H1 (cell line): ENCODE measurements at regions of chr1 and their contacts with region 1.

Region 1: DNA sequence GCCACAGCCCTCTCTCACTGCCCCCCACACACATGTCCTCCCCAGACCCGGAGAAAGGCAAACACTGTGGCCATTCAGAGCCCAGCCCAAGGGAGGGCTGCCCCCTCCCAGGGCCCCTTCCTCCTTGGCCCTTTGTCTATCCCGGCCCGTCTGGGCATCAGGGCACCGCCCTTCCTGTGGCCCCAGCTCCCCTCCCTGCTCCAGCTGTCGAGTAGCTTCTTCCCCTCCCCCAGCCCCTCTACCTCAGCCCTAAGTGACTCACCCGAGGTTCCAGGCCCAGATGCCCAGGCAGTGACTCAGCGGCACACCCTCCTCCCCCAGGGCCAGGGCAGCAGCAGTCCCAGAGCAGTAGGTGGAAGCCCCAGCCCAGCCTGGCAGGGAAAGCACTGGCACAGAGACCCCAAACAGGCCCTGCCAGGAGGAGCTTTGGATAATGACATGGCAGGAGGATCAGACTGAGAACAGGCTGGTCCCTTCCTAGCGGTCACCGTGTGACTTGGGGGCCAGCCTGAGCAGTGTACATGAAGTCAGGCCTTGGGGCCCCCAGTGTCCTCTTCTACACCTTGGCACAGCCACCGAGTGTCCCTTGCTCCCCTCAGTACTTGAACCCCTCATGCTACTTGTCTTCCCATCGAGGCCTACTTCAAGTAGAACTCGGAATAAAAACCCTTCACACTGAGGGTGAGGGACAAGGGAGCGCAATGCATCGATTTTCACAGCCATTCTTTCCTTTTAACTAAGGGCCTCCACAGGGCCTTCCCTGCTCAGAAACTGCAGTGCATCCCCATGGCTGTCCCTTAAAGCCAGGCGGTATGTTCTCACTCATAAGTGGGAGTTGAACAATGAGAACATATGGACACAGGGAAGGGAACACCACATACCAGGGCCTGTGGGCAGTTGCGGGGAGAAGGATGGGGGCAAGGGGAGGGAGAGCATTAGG is 1.1 kb upstream of the S100A2 start:
- DNase-seq: peak; percentile 76 to 90
- H3K4me3 ChIP-seq: no peak overlapping the region
- H3K27ac ChIP-seq: no peak overlapping the region
- H3K4me1 ChIP-seq: peaks cover 11 to 26% (median 20%) of the 10 kb centered on the region in 4 experiments
- H3K27me3 ChIP-seq: 0 out of 7 replicates have a peak, but pooled peaks cover 0 to 4% (median 0%) of the 10 kb centered on the region in 4 experiments
- CTCF ChIP-seq: no peak
- EP300 ChIP-seq: peak in 1 of 2 experiments; percentile 73; a peak in 1 of 3 replicates
- POLR2A ChIP-seq: peak in 1 of 2 experiments; percentile 24; a peak in 1 of 3 replicates
- RAD21 ChIP-seq: no peak; a peak in 2 of 4 replicates

Region 2: GRCh38 chr1:153272186-153272585 is 294.5 kb before region 1 on chr1:
- CTCF ChIA-PET with region 1: no interaction called
- POLR2A ChIA-PET with region 1: no interaction called
- DNase-seq: no peak
- H3K4me3 ChIP-seq: no peak overlapping the region
- H3K27ac ChIP-seq: no peak overlapping the region
- H3K4me1 ChIP-seq: no peaks in the 10 kb centered on the region
- H3K27me3 ChIP-seq: no peaks in the 10 kb centered on the region; a peak in 1 of 7 replicates
- CTCF ChIP-seq: no peak
- EP300 ChIP-seq: no peak
- POLR2A ChIP-seq: no peak
- RAD21 ChIP-seq: no peak

Region 3: DNA sequence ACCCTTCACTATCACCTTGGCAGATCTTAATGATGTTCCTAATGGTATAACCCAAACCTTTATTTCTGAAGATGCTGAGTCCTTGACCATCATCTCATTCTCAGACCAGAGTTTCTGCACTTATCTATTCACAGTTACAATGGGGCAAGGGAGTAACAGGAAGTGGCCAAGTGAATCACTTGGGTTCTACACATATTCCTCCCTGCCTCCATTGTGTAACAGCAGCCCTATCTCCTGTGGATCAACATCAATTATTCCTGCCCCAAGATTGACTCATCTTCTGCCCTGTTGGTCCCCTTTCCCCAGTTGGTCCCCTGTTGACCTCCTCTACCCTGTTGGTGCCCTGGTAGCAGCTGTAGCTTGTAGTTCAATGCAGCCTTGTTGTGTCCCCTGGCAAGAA is 96.0 kb before region 1 on chr1:
- CTCF ChIA-PET with region 1: no interaction called
- POLR2A ChIA-PET with region 1: no interaction called
- DNase-seq: no peak
- H3K4me3 ChIP-seq: no peak overlapping the region
- H3K27ac ChIP-seq: no peak overlapping the region
- H3K4me1 ChIP-seq: peaks cover 3 to 8% (median 5%) of the 10 kb centered on the region in 4 experiments; a peak in 5 of 7 replicates
- H3K27me3 ChIP-seq: no peaks in the 10 kb centered on the region; a peak in 1 of 7 replicates
- CTCF ChIP-seq: no peak
- EP300 ChIP-seq: no peak
- POLR2A ChIP-seq: no peak
- RAD21 ChIP-seq: no peak

Region 4: GRCh38 chr1:153545067-153546055 is 21.3 kb before region 1 on chr1 and contains the start of gene S100A4:
- CTCF ChIA-PET with region 1: interaction called, 53 read pairs
- POLR2A ChIA-PET with region 1: interaction called, 9 read pairs
- DNase-seq: peak in 1 of 2 experiments; percentile 87
- H3K4me3 ChIP-seq: peak within 1 kb of the TSS in 1 of 4 experiments; percentile 32; a peak in 2 of 8 replicates
- H3K27ac ChIP-seq: peak within 1 kb of the TSS; percentile 55
- H3K4me1 ChIP-seq: peaks cover 4 to 35% (median 21%) of the 10 kb centered on the region in 4 experiments
- H3K27me3 ChIP-seq: no peaks in the 10 kb centered on the region; a peak in 2 of 7 replicates
- CTCF ChIP-seq: no peak
- EP300 ChIP-seq: 0 out of 3 replicates have a peak, but pooled peaks of 1 of the 2 experiments have one; percentile 31
- POLR2A ChIP-seq: peak in 1 of 2 experiments; percentile 34; a peak in 1 of 3 replicates
- RAD21 ChIP-seq: no peak
- total RNA-seq, gene S100A4: 36.3 and 39.6 TPM in 2 replicates